Mammary epithelial cell (primary cell): ENCODE measurements at regions of chr11 and their contacts with region 1.

Region 1: DNA sequence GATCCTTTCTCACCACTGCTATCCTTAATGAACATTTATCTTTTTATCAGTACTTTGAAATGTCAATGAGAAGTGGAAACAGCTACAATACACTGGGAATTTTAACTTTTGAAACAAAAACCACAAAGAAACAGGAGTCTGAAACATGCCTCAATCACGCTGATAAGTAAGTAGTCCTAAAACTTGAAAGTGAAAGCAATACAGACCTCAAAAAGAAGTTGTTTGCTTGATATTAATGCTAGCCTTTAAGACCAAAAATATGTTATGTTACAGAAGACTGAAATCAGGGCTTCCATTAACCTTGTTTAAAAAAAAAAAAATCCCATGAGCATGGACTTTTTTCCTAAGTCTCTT is 21.3 kb downstream of the PHF21A start:
- DNase-seq: peak; percentile 20
- H3K4me3 ChIP-seq: peak overlapping the region in 2 of 3 experiments; percentile 25 to 52
- H3K27ac ChIP-seq: peak overlapping the region; percentile 56
- H3K4me1 ChIP-seq: peaks cover 6% of the 10 kb centered on the region
- H3K27me3 ChIP-seq: no peaks in the 10 kb centered on the region
- CTCF ChIP-seq: no peak

Region 2: DNA sequence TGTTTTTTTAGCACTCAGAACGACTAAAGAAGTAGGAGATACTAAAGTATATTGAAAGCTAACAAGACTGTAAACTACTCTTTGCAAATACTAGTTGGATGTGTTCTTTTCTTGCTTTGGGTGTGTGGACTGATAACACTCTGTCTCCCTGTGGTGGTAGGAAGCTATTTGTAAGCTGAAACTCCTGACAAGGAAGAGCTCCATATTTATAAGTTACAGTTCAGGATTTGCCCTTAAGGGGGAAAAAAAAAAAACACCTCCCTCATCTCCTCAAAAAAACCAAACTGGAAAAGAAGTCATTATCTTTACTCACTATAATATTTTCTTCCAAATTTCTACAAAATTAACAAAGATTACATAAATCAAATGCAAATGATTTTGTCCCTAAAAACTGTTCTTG is 82.6 kb before region 1 on chr11:
- CTCF ChIA-PET with region 1: no interaction called
- dilution Hi-C with region 1: no loop called
- in situ Hi-C with region 1: no loop called
- intact Hi-C with region 1: no loop called
- DNase-seq: no peak
- H3K4me3 ChIP-seq: no peak overlapping the region
- H3K27ac ChIP-seq: no peak overlapping the region
- H3K4me1 ChIP-seq: no peaks in the 10 kb centered on the region
- H3K27me3 ChIP-seq: no peaks in the 10 kb centered on the region
- CTCF ChIP-seq: no peak

Region 3: GRCh38 chr11:46039990-46040389 is 60.0 kb before region 1 on chr11:
- CTCF ChIA-PET with region 1: no interaction called
- dilution Hi-C with region 1: loop called (anchors 5 kb)
- in situ Hi-C with region 1: no loop called
- intact Hi-C with region 1: no loop called
- DNase-seq: no peak
- H3K4me3 ChIP-seq: no peak overlapping the region
- H3K27ac ChIP-seq: no peak overlapping the region
- H3K4me1 ChIP-seq: no peaks in the 10 kb centered on the region
- H3K27me3 ChIP-seq: no peaks in the 10 kb centered on the region
- CTCF ChIP-seq: no peak

Region 4: GRCh38 chr11:46121724-46122477 is 22.0 kb after region 1 on chr11:
- CTCF ChIA-PET with region 1: no interaction called
- dilution Hi-C with region 1: no loop called
- in situ Hi-C with region 1: no loop called
- intact Hi-C with region 1: loop called (anchors 1 kb)
- DNase-seq: peak; percentile 85
- H3K4me3 ChIP-seq: peak overlapping the region; percentile 66 to 77 (median 73)
- H3K27ac ChIP-seq: peak overlapping the region; percentile 18
- H3K4me1 ChIP-seq: peaks cover 11% of the 10 kb centered on the region
- H3K27me3 ChIP-seq: no peaks in the 10 kb centered on the region
- CTCF ChIP-seq: no peak

Region 5: GRCh38 chr11:46200537-46201281 is 100.8 kb after region 1 on chr11:
- CTCF ChIA-PET with region 1: no interaction called
- dilution Hi-C with region 1: no loop called
- in situ Hi-C with region 1: no loop called
- intact Hi-C with region 1: no loop called
- DNase-seq: peak; percentile 22
- H3K4me3 ChIP-seq: no peak overlapping the region
- H3K27ac ChIP-seq: no peak overlapping the region
- H3K4me1 ChIP-seq: no peaks in the 10 kb centered on the region
- H3K27me3 ChIP-seq: peaks cover 2% of the 10 kb centered on the region
- CTCF ChIP-seq: no peak